GM23248 (cell line): ENCODE measurements at regions of chr6 and their contacts with region 1.

Region 1: GRCh38 chr6:70706491-70707123 is 38.9 kb downstream of the SMAP1 start:
- DNase-seq: peak; percentile 65
- H3K4me3 ChIP-seq: no peak overlapping the region
- H3K27ac ChIP-seq: no peak overlapping the region
- H3K4me1 ChIP-seq: peaks cover 10% of the 10 kb centered on the region
- H3K27me3 ChIP-seq: no peaks in the 10 kb centered on the region

Region 2: GRCh38 chr6:70566751-70567382 is 139.7 kb before region 1 on chr6 and contains the start of gene SDHAF4:
- in situ Hi-C with region 1: no loop called
- DNase-seq: peak; percentile 95
- H3K4me3 ChIP-seq: peak within 1 kb of the TSS; percentile 88
- H3K27ac ChIP-seq: peak within 1 kb of the TSS; percentile 43
- H3K4me1 ChIP-seq: 0 out of 2 replicates have a peak, but pooled peaks cover 9% of the 10 kb centered on the region
- H3K27me3 ChIP-seq: no peaks in the 10 kb centered on the region
- total RNA-seq, gene SDHAF4: 10.9 TPM in 2 replicates

Region 3: GRCh38 chr6:70886661-70887060 is 180.1 kb after region 1 on chr6:
- in situ Hi-C with region 1: loop called (anchors 5 kb)
- DNase-seq: no peak
- H3K4me3 ChIP-seq: no peak overlapping the region
- H3K27ac ChIP-seq: no peak overlapping the region
- H3K4me1 ChIP-seq: no peaks in the 10 kb centered on the region
- H3K27me3 ChIP-seq: peaks cover 4% of the 10 kb centered on the region; the same call in 1 of the 2 replicates

Region 4: GRCh38 chr6:72132427-72132826 is 1425.8 kb after region 1 on chr6:
- in situ Hi-C with region 1: no loop called
- DNase-seq: peak; percentile 49
- H3K4me3 ChIP-seq: no peak overlapping the region
- H3K27ac ChIP-seq: peak overlapping the region; percentile 19; the same call in 1 of the 2 replicates
- H3K4me1 ChIP-seq: no peaks in the 10 kb centered on the region
- H3K27me3 ChIP-seq: 0 out of 2 replicates have a peak, but pooled peaks cover 8% of the 10 kb centered on the region